ENCODE measurements at regions of chr17 and their contacts with region 1.

Region 1: DNA sequence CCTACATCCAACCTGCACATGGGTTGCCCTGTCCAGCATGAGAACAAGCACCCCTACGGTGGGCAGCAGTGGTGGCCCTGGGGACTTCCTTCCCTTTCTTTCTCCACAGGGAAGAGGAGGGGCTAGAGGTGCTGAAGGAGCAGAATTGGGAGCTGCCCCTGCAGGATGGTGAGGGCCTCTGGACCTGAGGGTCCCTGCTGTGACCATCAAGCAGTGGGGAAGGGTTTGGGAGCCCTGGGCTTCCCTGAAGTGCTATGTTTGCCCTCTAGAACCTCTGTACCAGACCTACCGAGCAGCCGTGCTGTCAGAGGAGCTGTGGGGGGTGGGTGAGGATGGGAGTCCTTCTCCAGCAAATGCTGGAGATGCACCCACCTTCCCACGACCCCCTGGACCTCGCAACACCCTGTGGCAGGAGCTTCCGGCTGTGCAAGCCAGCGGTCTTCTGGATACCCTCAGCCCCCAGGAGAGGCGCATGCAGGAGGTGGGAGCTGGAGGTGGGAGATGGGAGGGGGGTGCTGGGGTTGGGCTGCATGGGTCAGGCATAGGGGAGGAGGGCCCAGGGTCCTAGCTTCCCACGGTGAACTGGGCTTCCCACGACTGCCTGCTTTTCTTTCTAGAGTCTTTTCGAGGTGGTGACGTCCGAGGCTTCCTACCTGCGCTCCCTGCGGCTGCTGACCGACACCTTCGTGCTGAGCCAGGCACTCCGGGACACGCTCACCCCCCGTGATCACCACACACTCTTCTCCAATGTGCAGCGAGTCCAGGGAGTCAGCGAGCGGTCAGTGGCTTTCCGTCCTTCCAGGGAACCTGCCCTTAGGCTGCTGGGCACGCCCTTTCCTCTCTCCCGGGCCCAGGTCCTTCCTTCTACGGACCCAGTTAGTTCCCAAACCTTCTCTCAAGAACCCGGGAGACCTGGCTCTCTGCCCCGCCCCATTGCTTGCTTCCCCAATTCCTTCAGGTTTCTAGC is 5.0 kb downstream of the ARHGEF15 start:
- DNase-seq: no peak
- H3K4me3 ChIP-seq: no peak overlapping the region
- H3K27ac ChIP-seq: no peak overlapping the region
- H3K4me1 ChIP-seq: peaks cover 0 to 16% (median 9%) of the 10 kb centered on the region in 4 donors
- H3K27me3 ChIP-seq: peaks cover 0 to 72% of the 10 kb centered on the region in 2 donors
- CTCF ChIP-seq: no peak

Region 2: GRCh38 chr17:8237175-8237574 is 77.9 kb before region 1 on chr17:
- intact Hi-C with region 1: no loop called
- DNase-seq: no peak
- H3K4me3 ChIP-seq: no peak overlapping the region
- H3K27ac ChIP-seq: no peak overlapping the region
- H3K4me1 ChIP-seq: no peaks in the 10 kb centered on the region
- H3K27me3 ChIP-seq: no peaks in the 10 kb centered on the region
- CTCF ChIP-seq: no peak

Region 3: GRCh38 chr17:8264836-8265542 is 50.1 kb before region 1 on chr17:
- intact Hi-C with region 1: loop called (anchors 5 kb)
- DNase-seq: no peak
- H3K4me3 ChIP-seq: no peak overlapping the region
- H3K27ac ChIP-seq: no peak overlapping the region
- H3K4me1 ChIP-seq: no peaks in the 10 kb centered on the region
- H3K27me3 ChIP-seq: no peaks in the 10 kb centered on the region
- CTCF ChIP-seq: no peak

Measured in tibial artery (tissue), 4 donors.